Right ventricle myocardium inferior (tissue), 1 donor: ENCODE measurements at regions of chr1 and their contacts with region 1.

Region 1: GRCh38 chr1:88549536-88549935 is 134.5 kb upstream of the PKN2 start:
- DNase-seq: no peak
- ATAC-seq: no peak

Region 2: GRCh38 chr1:88180449-88181108 is 369.0 kb before region 1 on chr1:
- intact Hi-C with region 1: loop called (anchors 5 kb)
- DNase-seq: peak; percentile 69
- ATAC-seq: peak; percentile 91

Region 3: DNA sequence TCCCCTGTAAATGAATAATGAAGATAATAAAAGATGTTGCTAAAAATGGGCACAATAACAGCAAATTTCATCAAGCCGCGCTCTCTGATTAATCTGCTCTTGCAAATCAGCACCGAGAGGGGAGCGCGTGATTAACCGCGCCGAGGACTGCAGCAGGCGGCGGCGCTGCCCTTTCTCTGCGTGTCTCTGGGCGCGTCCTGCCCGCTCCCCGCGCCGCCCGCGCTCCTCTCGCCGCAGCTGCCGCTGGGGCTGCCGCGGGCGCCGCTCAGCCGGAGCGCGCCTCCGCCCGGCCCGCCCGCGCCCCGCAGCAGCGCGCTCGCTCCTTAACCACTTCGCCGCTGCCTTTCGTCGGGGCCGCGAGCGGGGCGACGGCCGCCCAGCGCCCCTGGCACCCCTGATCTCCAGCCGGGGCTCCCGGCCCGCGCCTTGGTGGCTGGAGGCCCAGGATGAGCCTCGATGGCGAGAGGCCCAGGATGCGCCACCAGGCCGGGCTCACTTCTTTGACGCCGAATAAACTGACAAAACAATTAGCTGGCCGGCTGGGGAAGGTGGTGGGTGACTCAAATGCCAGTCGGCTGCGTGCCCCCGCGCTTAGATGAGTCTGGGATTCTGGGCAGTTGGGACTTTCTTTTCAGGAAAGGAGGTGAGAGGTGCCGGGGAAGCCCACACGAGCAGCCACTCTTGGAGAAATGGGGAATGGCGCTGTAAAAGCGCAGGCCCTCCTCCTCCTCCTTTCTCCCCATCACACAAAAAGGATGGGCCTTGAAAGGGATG is 86.9 kb before region 1 on chr1:
- intact Hi-C with region 1: loop called (anchors 5 kb)
- DNase-seq: peak; percentile 72
- ATAC-seq: peak; percentile 88